Activated CD4-positive, alpha-beta T cell treated with anti-CD3 and anti-CD28 coated beads for 36 hours (primary cell): ENCODE measurements at regions of chr1 and their contacts with region 1.

Region 1: GRCh38 chr1:228275739-228276421 is 68.0 kb downstream of the OBSCN start:
- DNase-seq: peak; percentile 94
- ATAC-seq: peak; percentile 96
- H3K4me3 Mint-ChIP-seq: peak overlapping the region; percentile 71
- H3K27ac Mint-ChIP-seq: no peak overlapping the region
- H3K4me1 Mint-ChIP-seq: peaks cover 6% of the 10 kb centered on the region
- H3K27me3 Mint-ChIP-seq: no peaks in the 10 kb centered on the region

Region 2: DNA sequence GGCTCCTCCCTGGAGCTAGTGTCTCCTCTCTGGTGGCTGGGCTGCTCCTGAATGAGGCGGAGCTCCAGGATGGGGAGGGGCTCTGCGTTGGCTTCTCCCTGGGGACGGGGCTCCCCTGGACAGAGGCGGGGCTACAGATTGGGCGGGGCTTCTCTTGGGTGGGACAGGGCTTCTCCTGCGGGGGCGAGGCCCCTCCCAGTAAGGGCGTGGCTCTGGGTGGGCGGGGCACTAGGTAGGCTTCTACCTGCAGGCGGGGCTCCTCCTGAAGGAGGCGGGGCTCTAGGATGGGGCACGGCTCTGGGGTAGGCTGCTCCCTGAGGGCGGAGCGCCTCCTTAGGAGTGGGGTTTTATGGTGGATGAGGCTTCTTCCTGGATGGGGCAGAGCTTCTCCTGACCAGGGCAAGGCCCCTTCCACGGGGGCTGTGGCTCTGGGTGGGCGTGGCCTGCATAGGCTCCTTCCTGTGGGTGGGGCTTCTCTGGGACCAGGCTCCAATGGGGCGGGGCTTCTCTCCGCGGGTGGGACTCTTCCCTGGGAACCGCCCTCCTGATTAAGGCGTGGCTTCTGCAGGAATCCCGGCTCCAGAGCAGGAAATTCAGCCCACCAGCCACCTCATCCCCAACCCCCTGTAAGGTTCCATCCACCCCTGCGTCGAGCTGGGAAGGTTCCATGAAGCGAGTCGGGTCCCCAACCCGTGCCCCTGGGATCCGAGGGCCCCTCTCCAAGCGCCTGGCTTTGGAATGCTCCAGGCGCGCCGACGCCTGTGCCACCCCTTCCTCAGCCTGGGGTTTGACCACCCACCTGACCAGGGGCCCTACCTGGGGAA is 216.0 kb before region 1 on chr1:
- CTCF ChIA-PET with region 1: no interaction called
- POLR2A ChIA-PET with region 1: no interaction called
- intact Hi-C with region 1: loop called in 1 of 2 experiments (anchors 1 kb)
- DNase-seq: peak; percentile 91
- ATAC-seq: peak; percentile 85
- H3K4me3 Mint-ChIP-seq: peak overlapping the region; percentile 51
- H3K27ac Mint-ChIP-seq: no peak overlapping the region
- H3K4me1 Mint-ChIP-seq: peaks cover 9% of the 10 kb centered on the region
- H3K27me3 Mint-ChIP-seq: peaks cover 30% of the 10 kb centered on the region

Region 3: GRCh38 chr1:228174482-228175375 is 101.2 kb before region 1 on chr1:
- CTCF ChIA-PET with region 1: no interaction called
- POLR2A ChIA-PET with region 1: no interaction called
- intact Hi-C with region 1: loop called (anchors 2 to 5 kb)
- DNase-seq: peak; percentile 59
- ATAC-seq: peak; percentile 67
- H3K4me3 Mint-ChIP-seq: no peak overlapping the region
- H3K27ac Mint-ChIP-seq: no peak overlapping the region
- H3K4me1 Mint-ChIP-seq: no peaks in the 10 kb centered on the region
- H3K27me3 Mint-ChIP-seq: no peaks in the 10 kb centered on the region

Region 4: GRCh38 chr1:228464487-228464983 is 188.7 kb after region 1 on chr1:
- CTCF ChIA-PET with region 1: no interaction called
- POLR2A ChIA-PET with region 1: no interaction called
- intact Hi-C with region 1: loop called in 1 of 2 experiments (anchors 2 kb)
- DNase-seq: peak; percentile 95
- ATAC-seq: peak; percentile 83
- H3K4me3 Mint-ChIP-seq: peak overlapping the region; percentile 84
- H3K27ac Mint-ChIP-seq: peak overlapping the region; percentile 92
- H3K4me1 Mint-ChIP-seq: peaks cover 50% of the 10 kb centered on the region
- H3K27me3 Mint-ChIP-seq: peaks cover 2% of the 10 kb centered on the region